Heart right ventricle (tissue), 16 donors: ENCODE measurements at regions of chr9 and their contacts with region 1.

Region 1: GRCh38 chr9:35814841-35815543 is at the start of gene HINT2:
- DNase-seq: peak; percentile 94 to 97
- ATAC-seq: peak; percentile 92 to 96 (median 95)
- H3K4me3 ChIP-seq: peak within 1 kb of the TSS; percentile 81 to 99 (median 94)
- H3K27ac ChIP-seq: peak within 1 kb of the TSS; percentile 97 to 100 (median 99)
- H3K4me1 ChIP-seq: peaks cover 0 to 43% (median 35%) of the 10 kb centered on the region in 9 donors
- H3K27me3 ChIP-seq: no peaks in the 10 kb centered on the region
- CTCF ChIP-seq: no peak
- total RNA-seq, gene HINT2: 56.8 to 83.1 (median 76.7) TPM

Region 2: DNA sequence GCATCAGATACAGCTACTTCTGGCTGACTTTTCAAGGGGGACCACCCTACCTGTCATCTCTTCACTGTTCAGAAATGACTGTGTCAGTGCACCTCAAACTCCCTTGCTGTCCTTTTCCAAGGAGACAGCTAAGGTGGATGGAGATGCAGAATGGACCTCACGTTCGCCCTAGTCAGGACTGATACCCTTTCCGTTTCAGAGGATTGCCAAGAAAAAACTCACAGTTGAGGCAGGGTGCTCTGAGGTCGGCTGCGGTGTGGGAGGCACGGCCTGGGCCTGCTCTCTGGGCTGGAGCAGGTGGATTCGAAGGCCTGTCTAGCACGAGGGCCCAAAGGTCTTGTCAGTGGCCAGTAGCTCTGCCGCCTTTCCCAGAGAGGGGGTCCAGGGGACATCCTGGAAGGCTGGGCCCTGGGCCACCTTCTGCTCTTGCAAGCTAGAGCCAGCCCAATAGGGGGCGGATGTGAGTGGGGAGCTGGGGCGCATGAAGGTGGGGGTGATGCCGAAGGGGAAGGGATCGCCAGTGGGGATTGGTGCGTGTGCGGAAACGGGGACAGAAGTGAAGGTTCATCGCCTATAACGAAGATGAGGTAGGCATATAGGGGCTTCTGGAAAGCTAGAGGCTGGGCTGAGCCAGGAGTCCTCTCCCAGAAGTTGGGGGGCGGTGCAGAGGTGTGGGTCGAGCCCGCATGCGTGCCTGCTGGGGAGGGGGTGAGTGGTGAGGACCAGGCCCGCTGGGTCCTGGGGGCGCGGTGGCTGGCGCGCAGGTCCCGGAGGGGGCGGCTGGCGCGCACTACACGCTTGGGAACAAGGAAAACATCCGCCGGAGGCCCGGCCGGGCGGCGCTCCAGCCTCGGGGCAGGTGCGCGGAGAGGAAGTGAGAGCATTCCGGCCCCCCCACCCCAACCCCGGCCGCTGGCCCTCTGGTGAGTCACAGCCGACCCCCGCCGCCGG is 58.4 kb before region 1 on chr9:
- intact Hi-C with region 1: loop called in 1 of 10 experiments (anchors 5 kb)
- DNase-seq: peak; percentile 76 to 85
- ATAC-seq: peak; percentile 81 to 91 (median 86)
- H3K4me3 ChIP-seq: peak overlapping the region; percentile 44 to 73 (median 60)
- H3K27ac ChIP-seq: peak overlapping the region; percentile 81 to 95 (median 91)
- H3K4me1 ChIP-seq: peaks cover 0 to 55% (median 29%) of the 10 kb centered on the region in 9 donors
- H3K27me3 ChIP-seq: no peaks in the 10 kb centered on the region
- CTCF ChIP-seq: peak; percentile 20 to 67 (median 60)